BJ (cell line): ENCODE measurements at regions of chr12 and their contacts with region 1.

Region 1: DNA sequence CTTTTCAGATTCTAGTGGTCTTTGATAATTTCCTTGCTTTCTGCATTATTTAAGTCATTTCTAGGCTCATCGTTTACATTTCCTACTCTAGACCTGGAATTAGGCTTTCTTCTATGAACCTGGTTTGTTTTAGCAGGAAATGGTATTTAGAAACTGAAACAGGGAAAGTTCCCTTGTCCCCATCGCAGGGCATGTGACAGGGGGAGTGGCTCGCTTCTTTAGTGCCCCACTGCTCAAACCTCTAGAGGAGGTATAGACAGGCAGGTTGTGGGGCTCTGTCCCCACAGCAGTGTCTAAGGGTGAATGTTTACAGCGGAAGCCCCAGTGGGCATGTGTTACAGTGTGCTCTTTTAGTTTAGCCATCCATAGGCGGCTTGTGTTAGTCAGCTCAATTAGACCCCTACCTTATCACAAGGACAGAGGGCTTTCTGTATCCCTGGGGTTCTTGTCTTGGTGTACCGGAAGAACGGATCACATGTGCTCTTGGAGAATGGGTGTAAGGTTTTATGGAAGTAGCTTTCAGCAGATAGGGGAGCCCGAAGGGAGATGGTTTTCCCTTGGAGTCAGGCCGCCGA is 25.0 kb downstream of the IFT81 start:
- DNase-seq: no peak
- H3K4me3 ChIP-seq: no peak overlapping the region
- H3K27me3 ChIP-seq: no peaks in the 10 kb centered on the region
- CTCF ChIP-seq: no peak

Region 2: GRCh38 chr12:108691175-108691997 is 1457.8 kb before region 1 on chr12:
- CTCF ChIA-PET with region 1: no interaction called
- POLR2A ChIA-PET with region 1: interaction called, 14 read pairs
- DNase-seq: peak; percentile 97
- H3K4me3 ChIP-seq: peak overlapping the region; percentile 4; the same call in 1 of the 2 replicates
- H3K27me3 ChIP-seq: no peaks in the 10 kb centered on the region
- CTCF ChIP-seq: peak; percentile 41; the same call in 1 of the 2 replicates

Region 3: DNA sequence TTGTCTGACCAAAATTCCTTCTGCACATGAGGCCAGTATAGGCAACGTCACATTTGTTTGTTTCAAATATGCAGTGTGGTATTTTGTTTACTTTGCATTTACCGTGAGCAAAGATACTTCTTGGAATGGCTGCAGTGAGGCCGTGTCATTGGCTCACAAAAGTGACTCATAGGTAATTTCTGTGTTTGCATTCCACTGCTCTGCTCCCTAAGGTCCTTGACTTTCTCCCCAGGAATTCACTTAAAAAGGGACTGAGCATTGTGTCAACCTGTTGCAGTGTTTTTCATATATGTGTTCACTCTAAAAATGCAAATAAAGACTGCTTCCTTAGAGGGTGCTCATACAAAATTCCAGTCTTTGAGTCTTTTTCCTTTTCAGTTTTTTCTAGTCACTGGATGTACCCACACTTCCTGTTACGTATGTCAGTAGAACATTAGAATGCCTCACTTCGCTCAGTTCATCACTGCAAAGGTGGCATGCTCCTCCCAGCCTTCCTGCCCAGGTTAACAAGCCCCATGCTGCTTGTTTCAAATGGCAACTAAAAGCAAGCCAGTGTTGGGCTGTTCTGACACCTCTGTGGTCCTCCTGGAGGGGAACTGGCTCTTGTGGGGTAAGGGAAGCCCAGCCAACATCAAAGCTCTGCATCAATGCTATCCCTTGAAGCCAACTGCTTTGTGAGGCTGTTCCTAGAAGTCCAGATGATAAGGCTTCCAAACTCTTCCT is 109.9 kb before region 1 on chr12:
- CTCF ChIA-PET with region 1: no interaction called
- POLR2A ChIA-PET with region 1: no interaction called
- DNase-seq: peak; percentile 89
- H3K4me3 ChIP-seq: no peak overlapping the region
- H3K27me3 ChIP-seq: no peaks in the 10 kb centered on the region
- CTCF ChIP-seq: no peak

Region 4: GRCh38 chr12:110134691-110135411 is 14.3 kb before region 1 on chr12:
- CTCF ChIA-PET with region 1: no interaction called
- POLR2A ChIA-PET with region 1: no interaction called
- DNase-seq: peak; percentile 26
- H3K4me3 ChIP-seq: no peak overlapping the region
- H3K27me3 ChIP-seq: no peaks in the 10 kb centered on the region
- CTCF ChIP-seq: no peak